Activated T-helper 1 cell treated with anti-CD3 and anti-CD28 coated beads, Interleukin-12 subunit alpha, Interleukin-12 subunit beta, Interleukin-2, Interleukin-4 antibody, amounts not matched to agents 30 ng/mL and 10 ng/mL and 1 ng/mL, durations not matched to agents 14 hours and 24 hours and 36 hours (primary cell): ENCODE measurements at regions of chr3 and their contacts with region 1.

Region 1: DNA sequence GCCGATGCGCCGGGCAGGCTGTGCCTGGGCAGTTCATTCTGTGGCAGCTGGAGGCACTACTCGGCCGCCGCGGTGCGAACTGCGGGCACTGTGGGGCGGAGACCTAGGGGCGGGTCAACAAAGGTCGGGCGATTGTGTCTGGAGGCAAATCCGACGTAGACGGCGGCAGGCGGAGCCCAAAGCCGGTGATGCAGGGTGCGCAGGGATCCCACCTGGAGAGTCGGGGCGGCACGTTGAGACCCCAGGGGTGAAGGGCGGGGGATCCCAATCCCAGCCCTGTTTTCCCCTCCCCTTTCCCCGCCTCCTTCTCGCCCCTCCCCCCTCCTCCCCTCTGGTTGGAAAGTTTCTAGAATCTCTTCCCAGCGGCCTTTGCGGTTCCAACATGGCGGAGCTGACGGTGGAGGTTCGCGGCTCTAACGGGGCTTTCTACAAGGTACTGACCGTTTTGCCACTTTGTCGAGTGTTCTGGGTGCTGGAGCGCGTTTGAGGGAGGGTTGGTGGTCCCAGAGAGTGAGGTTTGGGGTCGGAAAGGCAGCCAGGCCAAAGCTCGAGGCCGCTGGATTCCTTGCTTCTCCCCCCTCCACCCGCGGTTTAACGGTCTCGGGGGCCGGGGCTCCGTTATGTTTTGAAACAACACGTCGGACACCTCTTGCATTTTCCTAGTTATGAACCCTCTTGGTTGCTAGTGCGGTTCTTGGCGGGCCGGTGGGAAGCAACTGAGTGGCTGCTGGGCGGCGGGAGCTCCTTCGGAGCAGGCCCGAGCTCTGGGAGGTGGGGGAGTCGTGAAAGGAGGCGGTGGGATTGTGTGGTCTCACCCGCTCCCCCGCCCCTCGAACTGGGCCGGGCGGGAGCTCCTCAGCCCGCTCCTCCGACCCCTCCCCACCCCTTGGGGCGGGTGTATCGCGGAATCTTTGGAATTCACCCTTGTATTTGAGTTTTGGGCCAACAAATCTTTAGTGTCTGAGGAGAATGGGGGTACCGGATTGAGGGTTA is at the start of gene FXR1:
- DNase-seq: peak; percentile 76
- H3K4me3 Mint-ChIP-seq: peak within 1 kb of the TSS; percentile 91
- H3K27ac Mint-ChIP-seq: peak within 1 kb of the TSS; percentile 96
- H3K4me1 Mint-ChIP-seq: peaks cover 35% of the 10 kb centered on the region
- H3K27me3 Mint-ChIP-seq: no peaks in the 10 kb centered on the region
- total RNA-seq, gene FXR1: 140 and 141 TPM in 2 replicates

Region 2: DNA sequence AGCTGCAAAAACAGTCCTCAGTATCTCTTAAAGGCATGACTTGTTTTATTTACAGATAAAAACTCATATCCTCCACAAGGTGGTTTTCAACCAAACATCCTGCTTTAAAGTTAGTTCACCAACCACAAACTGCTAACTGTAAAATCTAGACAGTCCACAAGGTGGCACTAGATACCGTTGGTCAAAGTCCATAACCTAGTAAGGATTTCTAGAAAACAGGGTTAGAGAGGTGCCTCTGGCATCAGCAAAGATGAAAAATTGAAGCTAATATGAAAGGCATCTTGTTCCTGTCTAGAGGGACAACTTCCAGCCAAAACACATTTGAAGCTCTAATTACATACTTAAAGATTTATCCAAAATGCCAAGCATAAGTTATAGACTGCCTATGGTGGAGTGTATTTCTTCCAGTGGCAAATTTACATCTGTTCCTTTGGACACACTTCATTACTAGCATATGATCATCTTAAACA is 1897.0 kb before region 1 on chr3:
- intact Hi-C with region 1: loop called (anchors 10 kb)
- DNase-seq: peak; percentile 68
- H3K4me3 Mint-ChIP-seq: no peak overlapping the region
- H3K27ac Mint-ChIP-seq: peak overlapping the region; percentile 24
- H3K4me1 Mint-ChIP-seq: peaks cover 55% of the 10 kb centered on the region
- H3K27me3 Mint-ChIP-seq: peaks cover 7% of the 10 kb centered on the region

Region 3: DNA sequence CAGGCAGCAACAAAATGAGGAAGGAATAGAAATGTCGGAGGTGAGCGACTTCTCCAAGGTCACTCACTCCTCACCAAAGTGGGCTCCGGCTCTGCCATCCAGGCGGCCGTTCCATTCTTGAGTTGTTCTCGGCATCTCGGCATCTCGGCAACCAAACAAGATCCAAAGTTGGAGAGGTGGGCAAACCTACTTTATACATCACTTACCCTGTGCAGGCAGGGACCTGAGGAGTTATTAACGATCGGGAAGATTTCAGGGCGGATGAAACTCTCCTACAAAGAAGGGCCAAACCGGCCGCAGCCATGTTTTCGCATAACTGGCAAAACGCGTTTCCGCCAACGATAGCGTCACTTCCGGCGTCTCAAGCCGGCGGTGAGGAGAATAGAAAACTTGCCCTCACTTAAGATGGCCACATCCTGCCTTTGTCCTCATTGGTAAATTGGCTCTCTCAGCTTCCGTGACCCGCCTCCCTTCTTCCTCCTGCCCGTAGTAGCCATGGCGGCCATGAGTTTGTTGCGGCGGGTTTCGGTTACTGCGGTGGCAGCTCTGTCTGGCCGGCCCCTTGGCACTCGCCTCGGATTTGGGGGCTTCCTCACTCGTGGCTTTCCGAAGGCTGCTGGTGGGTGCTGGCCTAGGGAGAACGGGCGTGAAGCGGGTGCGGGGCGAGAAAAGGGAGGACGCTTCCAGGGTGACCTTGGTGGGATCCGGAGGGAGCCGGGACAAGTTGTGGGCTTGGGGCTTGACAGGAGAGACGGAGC is 1308.1 kb before region 1 on chr3 and contains the starts of genes MRPL47 and NDUFB5:
- intact Hi-C with region 1: loop called (anchors 1 kb)
- DNase-seq: peak; percentile 91
- H3K4me3 Mint-ChIP-seq: peak within 1 kb of the TSS; percentile 97
- H3K27ac Mint-ChIP-seq: peak within 1 kb of the TSS; percentile 99
- H3K4me1 Mint-ChIP-seq: peaks cover 36% of the 10 kb centered on the region
- H3K27me3 Mint-ChIP-seq: no peaks in the 10 kb centered on the region
- total RNA-seq, gene MRPL47: 65.1 and 65.5 TPM in 2 replicates
- total RNA-seq, gene NDUFB5: 81.5 and 86.1 TPM in 2 replicates

Region 4: DNA sequence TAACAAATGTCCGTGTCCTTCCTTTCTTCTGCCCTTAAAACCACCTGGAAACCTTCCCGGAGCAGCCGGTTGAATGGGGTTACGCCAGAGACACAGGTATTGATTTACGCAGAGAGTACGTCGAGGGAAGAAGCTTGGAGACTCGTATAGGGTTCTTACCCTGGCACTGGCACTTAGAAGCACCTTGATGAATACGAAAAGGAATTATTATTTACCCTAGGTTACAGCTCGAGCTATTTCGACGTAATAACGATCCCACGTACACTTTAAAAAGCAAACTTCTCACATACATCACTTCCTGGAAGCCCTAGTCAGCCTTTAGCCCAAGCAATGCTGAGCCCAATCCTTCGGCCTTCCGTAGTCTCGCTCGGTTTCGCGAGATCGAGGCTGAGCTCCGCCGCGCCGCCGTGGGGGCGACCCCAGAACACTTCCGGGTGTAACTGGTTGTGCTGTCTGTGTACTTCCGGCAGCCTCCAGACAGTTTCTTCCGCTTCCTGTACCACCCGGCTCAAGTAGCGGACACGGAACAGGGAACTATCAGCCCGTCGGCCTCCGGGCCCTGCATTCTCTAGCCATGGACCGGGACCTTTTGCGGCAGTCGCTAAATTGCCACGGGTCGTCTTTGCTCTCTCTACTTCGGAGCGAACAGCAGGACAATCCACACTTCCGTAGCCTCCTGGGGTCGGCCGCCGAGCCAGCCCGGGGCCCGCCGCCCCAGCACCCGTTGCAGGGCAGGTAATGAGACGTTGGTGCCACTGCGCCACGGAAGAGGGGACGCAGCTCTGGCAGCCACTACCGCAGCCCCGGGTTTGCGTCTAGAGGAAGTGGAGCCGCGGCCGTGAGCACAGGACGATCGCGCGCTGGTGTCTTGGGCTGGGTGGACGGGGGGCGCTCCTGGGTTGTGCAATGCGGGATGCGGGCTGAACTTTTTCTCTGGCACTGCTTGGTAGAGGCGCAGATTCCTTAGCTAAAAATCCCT is 310.6 kb before region 1 on chr3 and contains the start of gene TTC14:
- intact Hi-C with region 1: loop called (anchors 1 kb)
- DNase-seq: peak; percentile 92
- H3K4me3 Mint-ChIP-seq: peak within 1 kb of the TSS; percentile 91
- H3K27ac Mint-ChIP-seq: peak within 1 kb of the TSS; percentile 95
- H3K4me1 Mint-ChIP-seq: peaks cover 23% of the 10 kb centered on the region
- H3K27me3 Mint-ChIP-seq: peaks cover 20% of the 10 kb centered on the region
- total RNA-seq, gene TTC14: 43.9 and 50.0 TPM in 2 replicates

Region 5: GRCh38 chr3:180679178-180680096 is 233.2 kb before region 1 on chr3 and contains the start of gene CCDC39:
- intact Hi-C with region 1: loop called (anchors 10 kb)
- DNase-seq: peak; percentile 26
- H3K4me3 Mint-ChIP-seq: peak within 1 kb of the TSS; percentile 83
- H3K27ac Mint-ChIP-seq: peak within 1 kb of the TSS; percentile 64
- H3K4me1 Mint-ChIP-seq: peaks cover 22% of the 10 kb centered on the region
- H3K27me3 Mint-ChIP-seq: peaks cover 41% of the 10 kb centered on the region
- total RNA-seq, gene CCDC39: not detected in 2 replicates

Region 6: DNA sequence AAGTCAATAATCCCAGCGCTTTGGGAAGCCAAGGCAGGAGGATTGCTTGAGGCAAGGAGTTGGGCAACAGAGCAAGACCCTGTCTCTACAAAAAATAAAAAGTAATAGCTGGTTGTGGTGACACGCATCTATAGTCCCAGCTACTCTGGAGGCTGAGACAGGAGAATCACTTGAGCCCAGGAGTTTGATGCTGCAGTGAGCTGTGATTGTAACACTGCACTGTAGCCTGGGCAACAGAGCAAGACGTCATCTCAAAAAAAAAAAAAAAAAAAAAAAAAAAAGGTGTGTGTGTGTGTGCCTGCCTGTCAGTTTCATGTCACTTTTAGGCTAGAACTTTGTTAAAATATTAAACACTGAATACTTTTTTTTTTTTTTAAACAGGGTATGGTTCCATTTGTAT is 48.5 kb after region 1 on chr3:
- intact Hi-C with region 1: no loop called
- DNase-seq: no peak
- H3K4me3 Mint-ChIP-seq: no peak overlapping the region
- H3K27ac Mint-ChIP-seq: no peak overlapping the region
- H3K4me1 Mint-ChIP-seq: peaks cover 14% of the 10 kb centered on the region
- H3K27me3 Mint-ChIP-seq: no peaks in the 10 kb centered on the region

Region 7: GRCh38 chr3:180989291-180990163 is 76.9 kb after region 1 on chr3 and contains the start of gene DNAJC19:
- intact Hi-C with region 1: loop called (anchors 1 kb)
- DNase-seq: peak; percentile 86
- H3K4me3 Mint-ChIP-seq: peak within 1 kb of the TSS; percentile 91
- H3K27ac Mint-ChIP-seq: peak within 1 kb of the TSS; percentile 88
- H3K4me1 Mint-ChIP-seq: peaks cover 14% of the 10 kb centered on the region
- H3K27me3 Mint-ChIP-seq: no peaks in the 10 kb centered on the region
- total RNA-seq, gene DNAJC19: 59.3 and 60.8 TPM in 2 replicates

Region 8: GRCh38 chr3:181660337-181660736 is 747.7 kb after region 1 on chr3:
- intact Hi-C with region 1: no loop called
- DNase-seq: no peak
- H3K4me3 Mint-ChIP-seq: no peak overlapping the region
- H3K27ac Mint-ChIP-seq: no peak overlapping the region
- H3K4me1 Mint-ChIP-seq: no peaks in the 10 kb centered on the region
- H3K27me3 Mint-ChIP-seq: peaks cover 2% of the 10 kb centered on the region